ENCODE measurements at regions of chr4 and their contacts with region 1.

Region 1: GRCh38 chr4:147866532-147867271 is 134.8 kb downstream of the ARHGAP10 start:
- DNase-seq: peak; percentile 33 to 78
- ATAC-seq: peak; percentile 92 to 98
- H3K4me3 ChIP-seq: no peak overlapping the region
- H3K27ac ChIP-seq: no peak overlapping the region
- H3K4me1 ChIP-seq: no peaks in the 10 kb centered on the region
- CTCF ChIP-seq: peak; percentile 99
- EP300 ChIP-seq: no peak
- POLR2A ChIP-seq: no peak
- RAD21 ChIP-seq: peak; percentile 98

Region 2: GRCh38 chr4:147617173-147617840 is 249.4 kb before region 1 on chr4 and contains the start of gene TMEM184C:
- CTCF ChIA-PET with region 1: interaction called, 16 read pairs
- POLR2A ChIA-PET with region 1: no interaction called
- DNase-seq: peak; percentile 89 to 92
- ATAC-seq: peak; percentile 99 to 100
- H3K4me3 ChIP-seq: peak within 1 kb of the TSS; percentile 89
- H3K27ac ChIP-seq: peak within 1 kb of the TSS; percentile 87 to 90
- H3K4me1 ChIP-seq: peaks cover 5% of the 10 kb centered on the region; the same call in 1 of the 3 replicates
- CTCF ChIP-seq: no peak
- EP300 ChIP-seq: no peak
- POLR2A ChIP-seq: peak; percentile 71
- RAD21 ChIP-seq: no peak
- polyA plus RNA-seq, gene TMEM184C: 25.2 and 30.5 TPM in 2 replicates

Region 3: DNA sequence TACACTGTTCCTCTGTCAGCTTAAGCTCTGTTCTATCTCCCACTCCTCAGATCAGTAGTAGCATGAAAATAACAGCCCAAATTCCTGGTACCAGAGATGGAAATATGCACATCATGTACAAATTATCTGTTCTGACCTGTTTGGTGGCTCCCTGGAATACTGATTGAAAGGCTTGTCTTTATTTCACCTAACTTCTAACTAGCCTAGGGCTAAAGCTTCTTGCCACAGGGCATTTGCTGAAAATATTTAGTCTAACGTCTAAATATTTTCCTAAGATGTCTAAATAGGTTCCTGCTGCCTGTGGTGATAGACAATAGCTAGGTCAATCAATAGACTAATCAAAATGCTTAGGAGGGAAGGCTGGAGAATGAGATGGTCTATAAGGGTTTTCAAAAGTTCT is 169.8 kb before region 1 on chr4:
- CTCF ChIA-PET with region 1: interaction called, 39 read pairs
- POLR2A ChIA-PET with region 1: no interaction called
- DNase-seq: no peak
- ATAC-seq: no peak
- H3K4me3 ChIP-seq: no peak overlapping the region
- H3K27ac ChIP-seq: no peak overlapping the region
- H3K4me1 ChIP-seq: peaks cover 13% of the 10 kb centered on the region
- CTCF ChIP-seq: no peak
- EP300 ChIP-seq: no peak
- POLR2A ChIP-seq: no peak
- RAD21 ChIP-seq: no peak

Region 4: GRCh38 chr4:147731580-147732517 is 134.9 kb before region 1 on chr4 and contains the start of gene ARHGAP10:
- CTCF ChIA-PET with region 1: interaction called, 41 read pairs
- POLR2A ChIA-PET with region 1: interaction called, 4 read pairs
- DNase-seq: peak; percentile 57 to 64
- ATAC-seq: peak; percentile 84
- H3K4me3 ChIP-seq: peak within 1 kb of the TSS; percentile 82
- H3K27ac ChIP-seq: peak within 1 kb of the TSS; percentile 73 to 88
- H3K4me1 ChIP-seq: peaks cover 28% of the 10 kb centered on the region
- CTCF ChIP-seq: no peak
- EP300 ChIP-seq: no peak
- POLR2A ChIP-seq: peak; percentile 44
- RAD21 ChIP-seq: no peak
- polyA plus RNA-seq, gene ARHGAP10: 6.0 and 7.2 TPM in 2 replicates

Region 5: GRCh38 chr4:147831551-147832177 is 35.0 kb before region 1 on chr4:
- CTCF ChIA-PET with region 1: interaction called, 11 read pairs
- POLR2A ChIA-PET with region 1: no interaction called
- DNase-seq: peak; percentile 71 to 75
- ATAC-seq: peak; percentile 90
- H3K4me3 ChIP-seq: no peak overlapping the region
- H3K27ac ChIP-seq: peak overlapping the region; percentile 80 to 81
- H3K4me1 ChIP-seq: peaks cover 28% of the 10 kb centered on the region
- CTCF ChIP-seq: no peak
- EP300 ChIP-seq: no peak
- POLR2A ChIP-seq: no peak
- RAD21 ChIP-seq: no peak

Region 6: GRCh38 chr4:147855571-147856009 is 11.1 kb before region 1 on chr4:
- CTCF ChIA-PET with region 1: interaction called, 33 read pairs
- POLR2A ChIA-PET with region 1: no interaction called
- DNase-seq: no peak
- ATAC-seq: no peak
- H3K4me3 ChIP-seq: no peak overlapping the region
- H3K27ac ChIP-seq: no peak overlapping the region
- H3K4me1 ChIP-seq: no peaks in the 10 kb centered on the region
- CTCF ChIP-seq: no peak
- EP300 ChIP-seq: no peak
- POLR2A ChIP-seq: no peak
- RAD21 ChIP-seq: no peak

Region 7: GRCh38 chr4:148030193-148030873 is 163.6 kb after region 1 on chr4:
- CTCF ChIA-PET with region 1: no interaction called
- POLR2A ChIA-PET with region 1: no interaction called
- DNase-seq: no peak
- ATAC-seq: no peak
- H3K4me3 ChIP-seq: no peak overlapping the region
- H3K27ac ChIP-seq: peak overlapping the region in 1 of 2 experiments; percentile 30; a peak in 2 of 6 replicates
- H3K4me1 ChIP-seq: 0 out of 3 replicates have a peak, but pooled peaks cover 3% of the 10 kb centered on the region
- CTCF ChIP-seq: no peak
- EP300 ChIP-seq: no peak
- POLR2A ChIP-seq: no peak
- RAD21 ChIP-seq: no peak

Measured in A549 (cell line).